Sciatic nerve (tissue), 2 donors: ENCODE measurements at regions of chr5 and their contacts with region 1.

Region 1: GRCh38 chr5:126939877-126940276 is 90.5 kb downstream of the MARCHF3 start:
- DNase-seq: no peak
- ATAC-seq: no peak

Region 2: GRCh38 chr5:126228934-126229333 is 710.9 kb before region 1 on chr5:
- intact Hi-C with region 1: loop called (anchors 5 kb)
- DNase-seq: no peak
- ATAC-seq: no peak

Region 3: GRCh38 chr5:126831156-126831555 is 108.7 kb before region 1 on chr5:
- intact Hi-C with region 1: no loop called
- DNase-seq: no peak
- ATAC-seq: no peak